ENCODE measurements at regions of chr5 and their contacts with region 1.

Region 1: DNA sequence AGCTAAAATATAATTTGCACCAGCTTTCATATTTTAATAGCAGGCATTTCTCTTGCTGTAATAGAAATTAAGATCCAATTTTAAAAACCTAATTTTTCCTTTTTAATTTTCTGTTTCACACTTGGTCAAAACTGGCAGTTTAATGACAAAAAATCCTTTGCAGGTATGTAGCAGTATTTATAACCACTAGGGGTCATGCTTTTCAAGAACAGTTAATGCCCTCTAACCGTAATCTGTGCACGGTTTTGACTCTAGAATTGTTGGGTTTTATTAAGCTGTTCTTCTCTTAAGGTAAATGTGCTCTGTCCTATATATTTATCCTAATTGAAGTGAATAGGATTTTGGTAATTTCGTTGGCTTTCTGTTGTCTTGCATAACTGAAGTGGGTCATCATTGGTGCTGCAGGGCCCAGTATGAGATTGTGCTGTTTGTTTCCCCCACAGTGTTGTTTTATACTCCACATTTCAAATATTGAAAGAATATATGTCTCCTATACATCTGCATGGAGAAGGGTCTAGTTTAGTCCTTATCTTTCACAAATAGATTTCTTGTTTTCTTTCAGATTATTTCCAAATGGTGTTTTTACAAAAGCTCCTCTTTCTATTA is 107.4 kb downstream of the SCAMP1 start:
- DNase-seq: peak; percentile 18
- H3K4me3 ChIP-seq: no peak overlapping the region
- H3K27ac ChIP-seq: no peak overlapping the region
- H3K27me3 ChIP-seq: no peaks in the 10 kb centered on the region
- CTCF ChIP-seq: peak; percentile 77

Region 2: DNA sequence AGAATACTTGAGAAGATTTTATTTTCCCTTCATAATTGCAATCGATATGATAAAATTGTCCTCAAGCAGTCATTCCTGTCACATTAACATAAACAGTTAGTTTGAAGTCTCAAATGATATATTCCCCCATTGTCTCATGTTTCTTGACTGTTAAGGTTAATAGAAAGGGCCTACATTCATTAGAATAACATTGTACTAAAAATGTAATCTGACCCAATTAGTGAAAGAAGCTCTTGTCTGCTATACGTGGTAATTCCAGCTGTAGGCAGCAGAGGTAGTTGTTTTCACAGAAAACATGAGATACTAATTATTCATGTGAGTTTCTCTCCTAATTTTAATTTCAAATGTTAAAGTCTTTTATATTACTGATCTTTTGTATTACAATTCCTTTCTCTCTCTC is 147.5 kb before region 1 on chr5:
- CTCF ChIA-PET with region 1: interaction called, 10 read pairs
- POLR2A ChIA-PET with region 1: no interaction called
- DNase-seq: peak; percentile 26
- H3K4me3 ChIP-seq: no peak overlapping the region
- H3K27ac ChIP-seq: no peak overlapping the region
- H3K27me3 ChIP-seq: no peaks in the 10 kb centered on the region
- CTCF ChIP-seq: peak; percentile 76

Region 3: GRCh38 chr5:78447775-78448424 is 20.0 kb before region 1 on chr5:
- CTCF ChIA-PET with region 1: interaction called, 10 read pairs
- POLR2A ChIA-PET with region 1: no interaction called
- DNase-seq: no peak
- H3K4me3 ChIP-seq: no peak overlapping the region
- H3K27ac ChIP-seq: no peak overlapping the region
- H3K27me3 ChIP-seq: no peaks in the 10 kb centered on the region
- CTCF ChIP-seq: no peak

Region 4: GRCh38 chr5:78483809-78484521 is 16.1 kb after region 1 on chr5:
- CTCF ChIA-PET with region 1: interaction called, 14 read pairs
- POLR2A ChIA-PET with region 1: no interaction called
- DNase-seq: no peak
- H3K4me3 ChIP-seq: no peak overlapping the region
- H3K27ac ChIP-seq: no peak overlapping the region
- H3K27me3 ChIP-seq: no peaks in the 10 kb centered on the region
- CTCF ChIP-seq: 0 out of 2 replicates have a peak, but pooled peaks have one; percentile 7

Region 5: DNA sequence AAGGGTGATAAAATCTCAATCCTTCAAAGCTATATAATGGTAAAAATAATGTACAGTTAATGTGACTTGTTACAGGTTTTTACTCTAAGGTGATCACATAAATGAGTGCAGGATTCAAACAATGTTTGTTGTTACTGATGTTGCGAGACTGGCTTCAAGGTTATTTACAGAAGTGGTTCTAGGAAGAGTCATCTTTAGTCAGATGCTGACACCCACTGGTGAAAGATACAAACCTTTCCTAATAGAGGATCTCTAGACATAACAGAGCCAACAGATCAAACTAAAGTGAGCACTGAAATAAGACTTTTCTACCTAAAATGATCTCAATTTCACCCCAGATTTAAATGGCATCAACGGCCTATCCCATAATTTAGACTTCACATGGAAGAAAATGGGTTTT is 497.0 kb after region 1 on chr5:
- CTCF ChIA-PET with region 1: interaction called, 26 read pairs
- POLR2A ChIA-PET with region 1: no interaction called
- DNase-seq: peak; percentile 59
- H3K4me3 ChIP-seq: no peak overlapping the region
- H3K27ac ChIP-seq: no peak overlapping the region
- H3K27me3 ChIP-seq: no peaks in the 10 kb centered on the region
- CTCF ChIP-seq: peak; percentile 63

Measured in AG04450 (cell line).